Heart right ventricle (tissue), 16 donors: ENCODE measurements at regions of chr20 and their contacts with region 1.

Region 1: DNA sequence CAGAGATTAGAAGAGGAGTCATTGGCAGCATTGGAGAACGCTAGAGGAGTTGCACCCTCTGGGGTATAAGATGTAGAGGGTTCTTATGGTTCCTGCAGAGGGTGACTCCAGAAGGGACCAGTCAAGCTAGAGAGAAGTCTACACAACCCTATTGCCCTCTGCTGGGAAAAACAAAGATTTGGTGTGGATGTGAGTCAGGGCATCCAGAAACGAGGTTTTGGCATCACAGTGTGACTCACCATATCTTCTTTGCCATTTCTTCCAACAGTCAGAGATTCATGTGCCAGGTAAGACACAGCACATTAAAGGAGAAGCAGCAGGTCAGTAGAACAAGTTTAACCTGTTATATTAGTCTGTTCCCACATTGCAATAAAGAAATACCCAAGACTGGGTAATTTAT is 598.8 kb downstream of the MAFB start:
- DNase-seq: no peak
- ATAC-seq: no peak
- H3K4me3 ChIP-seq: no peak overlapping the region
- H3K27ac ChIP-seq: no peak overlapping the region
- H3K4me1 ChIP-seq: no peaks in the 10 kb centered on the region
- H3K27me3 ChIP-seq: no peaks in the 10 kb centered on the region
- CTCF ChIP-seq: no peak

Region 2: DNA sequence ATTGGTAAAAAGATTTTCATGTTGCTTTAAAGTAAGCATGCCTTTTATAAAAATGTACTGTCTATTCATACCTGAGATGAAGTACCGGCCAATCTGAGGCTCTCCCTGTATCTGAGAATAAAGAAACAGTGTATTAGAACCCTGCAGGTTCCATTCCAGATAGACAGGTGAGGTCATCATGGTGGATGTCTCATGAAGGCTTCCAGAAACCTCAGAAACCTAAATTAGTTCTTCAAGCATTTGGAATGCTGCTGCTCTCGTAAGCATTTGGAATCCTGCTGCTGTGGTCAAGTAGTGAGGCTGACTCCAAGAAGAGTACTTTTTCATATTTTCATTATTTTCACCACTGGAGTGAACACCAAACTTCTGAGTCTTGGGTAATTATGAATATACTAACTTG is 43.5 kb before region 1 on chr20:
- intact Hi-C with region 1: loop called in 1 of 10 experiments (anchors 5 kb)
- DNase-seq: no peak
- ATAC-seq: no peak
- H3K4me3 ChIP-seq: no peak overlapping the region
- H3K27ac ChIP-seq: no peak overlapping the region
- H3K4me1 ChIP-seq: no peaks in the 10 kb centered on the region
- H3K27me3 ChIP-seq: no peaks in the 10 kb centered on the region
- CTCF ChIP-seq: no peak